ENCODE measurements at regions of chr4 and their contacts with region 1.

Region 1: GRCh38 chr4:17810260-17811077 is at the starts of genes DCAF16 and NCAPG:
- DNase-seq: peak; percentile 99 to 100 (median 99)
- H3K4me3 ChIP-seq: peak within 1 kb of the TSS; percentile 85 to 99 (median 94)
- H3K27ac ChIP-seq: peak within 1 kb of the TSS; percentile 96 to 98
- H3K4me1 ChIP-seq: peaks cover 18 to 65% (median 39%) of the 10 kb centered on the region in 4 experiments
- H3K27me3 ChIP-seq: no peaks in the 10 kb centered on the region

Region 2: DNA sequence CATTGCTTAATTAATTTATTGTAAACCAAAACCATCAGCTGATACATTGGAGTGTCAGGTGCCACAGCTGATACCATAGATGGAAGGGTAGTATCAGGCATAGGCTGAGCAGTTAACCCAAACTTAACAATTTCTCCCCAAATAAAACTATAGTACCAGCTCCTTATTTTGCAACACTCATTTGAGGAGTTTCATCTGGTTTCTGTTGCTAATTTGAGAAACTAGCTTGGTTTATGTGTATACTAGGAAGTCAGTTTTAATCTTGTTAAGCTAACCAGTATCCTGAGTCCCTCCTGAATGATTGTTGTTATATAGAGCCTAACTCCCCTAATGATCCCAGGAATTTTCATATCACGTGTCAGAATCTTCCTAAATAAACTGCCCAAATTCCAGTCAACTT is 12.7 kb before region 1 on chr4:
- CTCF ChIA-PET with region 1: interaction called, 30 read pairs
- POLR2A ChIA-PET with region 1: no interaction called
- DNase-seq: no peak
- H3K4me3 ChIP-seq: no peak overlapping the region
- H3K27ac ChIP-seq: no peak overlapping the region
- H3K4me1 ChIP-seq: no peaks in the 10 kb centered on the region
- H3K27me3 ChIP-seq: no peaks in the 10 kb centered on the region